ENCODE measurements at regions of chr10 and their contacts with region 1.

Region 1: GRCh38 chr10:95374597-95375209 is 83.9 kb upstream of the PDLIM1 start:
- DNase-seq: peak; percentile 60 to 73
- ATAC-seq: peak; percentile 88 to 95
- H3K4me3 ChIP-seq: no peak overlapping the region
- H3K27ac ChIP-seq: peak overlapping the region in 2 of 4 donors; percentile 4 to 7
- H3K4me1 ChIP-seq: peaks cover 6 to 14% of the 10 kb centered on the region in 2 donors
- H3K27me3 ChIP-seq: no peaks in the 10 kb centered on the region
- CTCF ChIP-seq: peak; percentile 83 to 93 (median 85)
- POLR2A ChIP-seq: no peak

Region 2: GRCh38 chr10:95327367-95327766 is 47.3 kb before region 1 on chr10:
- in situ Hi-C with region 1: no loop called
- intact Hi-C with region 1: loop called (anchors 1 kb)
- DNase-seq: peak; percentile 80 to 92
- ATAC-seq: peak; percentile 91
- H3K4me3 ChIP-seq: no peak overlapping the region
- H3K27ac ChIP-seq: peak overlapping the region; percentile 76 to 86 (median 83)
- H3K4me1 ChIP-seq: peaks cover 57 to 74% of the 10 kb centered on the region in 2 donors
- H3K27me3 ChIP-seq: no peaks in the 10 kb centered on the region
- CTCF ChIP-seq: peak in 2 of 5 experiments; percentile 20 to 38
- POLR2A ChIP-seq: peak in 1 of 2 donors; percentile 18

Region 3: GRCh38 chr10:95423164-95424005 is 48.7 kb after region 1 on chr10:
- in situ Hi-C with region 1: loop called in 2 of 4 experiments (anchors 10 kb)
- intact Hi-C with region 1: no loop called
- DNase-seq: no peak
- ATAC-seq: no peak
- H3K4me3 ChIP-seq: no peak overlapping the region
- H3K27ac ChIP-seq: peak overlapping the region; percentile 9 to 52 (median 38)
- H3K4me1 ChIP-seq: peaks cover 14 to 17% of the 10 kb centered on the region in 2 donors
- H3K27me3 ChIP-seq: no peaks in the 10 kb centered on the region
- CTCF ChIP-seq: no peak
- POLR2A ChIP-seq: no peak

Region 4: DNA sequence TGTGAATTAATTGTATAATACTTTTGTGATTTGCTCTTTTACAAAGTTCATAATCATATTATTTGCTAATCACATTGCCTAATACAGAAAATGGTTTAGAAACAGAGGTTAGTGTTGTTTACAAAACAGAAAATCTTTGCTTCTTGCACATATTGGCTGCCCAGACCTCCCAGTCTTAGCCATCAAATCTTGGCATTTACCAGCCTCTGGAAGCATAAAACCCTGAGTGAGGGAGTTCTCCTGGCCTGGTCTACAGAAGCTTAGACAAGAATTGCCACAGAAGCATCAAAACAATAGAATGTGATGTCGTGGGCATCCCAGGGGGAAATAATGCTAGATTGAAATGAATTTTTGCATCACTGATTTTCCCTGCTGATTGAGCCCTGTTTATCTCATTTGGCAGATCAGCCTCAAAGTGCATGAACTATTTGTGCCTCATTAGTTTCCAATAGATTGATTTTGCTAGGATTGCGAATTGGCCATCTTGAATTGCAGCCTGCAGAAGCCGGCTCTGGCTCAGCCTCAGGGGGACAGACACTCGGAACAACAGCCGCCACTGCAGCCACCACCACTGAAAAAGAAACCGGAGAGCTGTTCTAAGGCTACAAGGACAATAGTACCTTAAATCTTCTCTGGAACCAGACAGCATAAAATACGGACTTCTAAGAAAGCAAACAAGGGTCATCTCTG is 197.6 kb after region 1 on chr10:
- in situ Hi-C with region 1: loop called in 1 of 4 experiments (anchors 10 kb)
- intact Hi-C with region 1: no loop called
- DNase-seq: no peak
- ATAC-seq: peak in 1 of 2 donors; percentile 35
- H3K4me3 ChIP-seq: peak overlapping the region in 2 of 4 donors; percentile 25 to 27
- H3K27ac ChIP-seq: peak overlapping the region in 2 of 4 donors; percentile 14 to 40
- H3K4me1 ChIP-seq: peaks cover 25 to 28% of the 10 kb centered on the region in 2 donors
- H3K27me3 ChIP-seq: no peaks in the 10 kb centered on the region
- CTCF ChIP-seq: no peak
- POLR2A ChIP-seq: no peak